Aorta (tissue), 5 donors: ENCODE measurements at regions of chr5 and their contacts with region 1.

Region 1: GRCh38 chr5:135466178-135467050 is 14.3 kb upstream of the TIFAB start:
- DNase-seq: peak; percentile 85 to 94
- ATAC-seq: peak; percentile 87
- H3K4me3 ChIP-seq: no peak overlapping the region
- H3K27ac ChIP-seq: no peak overlapping the region
- H3K4me1 ChIP-seq: no peaks in the 10 kb centered on the region
- H3K27me3 ChIP-seq: no peaks in the 10 kb centered on the region

Region 2: DNA sequence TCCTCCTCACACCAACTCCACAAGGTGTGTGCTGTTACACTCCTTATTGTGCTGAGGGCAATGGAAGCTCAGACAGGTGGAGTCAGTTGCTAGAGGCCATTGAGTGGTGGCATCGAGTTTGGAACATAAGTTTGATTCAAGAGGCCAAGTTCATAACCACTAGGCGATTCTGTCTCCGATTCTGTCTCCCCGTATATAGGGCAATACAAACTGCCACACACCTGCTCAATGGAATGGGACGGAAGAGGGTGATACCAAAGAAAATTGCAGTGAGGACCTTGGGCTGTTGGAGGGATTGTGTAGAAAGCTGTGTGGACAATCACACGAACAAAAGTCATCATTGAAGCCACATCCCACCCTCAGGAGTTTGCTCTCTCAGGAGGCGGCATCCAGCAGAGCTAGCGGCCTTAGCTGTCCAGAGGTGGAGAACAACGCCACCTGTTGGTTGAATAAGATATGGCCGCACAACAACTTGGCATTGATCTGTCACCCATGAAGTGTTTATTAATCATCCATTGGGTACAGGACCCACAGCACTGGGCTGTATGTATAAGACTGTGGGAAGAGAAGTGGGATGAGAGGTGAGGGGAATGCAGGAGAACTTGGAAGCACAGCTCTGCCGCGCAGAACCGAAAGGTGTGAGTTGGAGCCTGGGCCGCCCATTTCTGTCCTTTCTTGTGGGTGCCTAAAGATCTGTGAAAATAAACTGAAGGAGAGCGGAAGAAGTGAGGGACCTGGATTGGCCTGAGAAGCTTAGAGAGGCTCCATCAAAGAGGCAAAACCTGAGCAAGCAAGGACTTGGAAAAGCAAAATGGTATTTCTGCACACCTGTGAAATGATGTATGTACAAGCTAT is 85.4 kb after region 1 on chr5:
- intact Hi-C with region 1: loop called (anchors 1 to 2 kb)
- DNase-seq: peak in 1 of 2 donors; percentile 68
- ATAC-seq: peak; percentile 78
- H3K4me3 ChIP-seq: no peak overlapping the region
- H3K27ac ChIP-seq: no peak overlapping the region
- H3K4me1 ChIP-seq: no peaks in the 10 kb centered on the region
- H3K27me3 ChIP-seq: peaks cover 0 to 1% of the 10 kb centered on the region in 2 donors

Region 3: DNA sequence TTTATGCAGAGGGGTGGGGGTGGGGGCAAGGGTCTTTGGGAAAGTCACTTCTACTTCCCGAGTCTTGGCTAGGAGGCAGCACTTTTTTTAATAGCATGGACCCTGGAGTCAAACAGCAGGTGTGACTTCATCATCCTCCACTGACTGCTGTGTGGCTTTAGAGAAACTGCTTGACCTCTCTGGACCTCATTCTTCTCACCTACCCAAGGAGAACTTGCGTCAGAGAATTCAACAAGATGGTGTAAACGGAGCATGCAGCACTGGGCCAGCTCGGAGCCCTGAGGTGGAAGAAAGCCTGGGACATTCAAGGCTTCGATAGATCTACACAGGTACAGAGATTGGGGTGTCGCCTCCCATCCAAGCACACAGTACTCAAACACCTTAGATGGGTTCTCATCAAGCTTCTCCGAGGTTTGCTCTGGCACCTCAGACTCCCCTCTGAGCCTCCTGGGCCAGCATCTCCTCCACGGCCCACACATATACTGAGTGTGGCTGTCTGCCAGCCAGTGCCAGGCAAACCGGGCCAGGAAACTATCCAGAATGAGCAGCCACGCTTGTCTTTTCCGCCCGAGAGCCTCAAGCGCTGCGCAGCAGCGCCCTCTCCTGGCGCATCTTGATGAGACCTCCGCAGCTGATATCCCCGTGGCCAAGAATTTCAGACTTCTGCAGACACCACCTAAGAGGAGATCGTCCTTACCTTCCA is 363.4 kb after region 1 on chr5:
- intact Hi-C with region 1: loop called in 1 of 2 experiments (anchors 5 kb)
- DNase-seq: peak; percentile 61 to 85
- ATAC-seq: peak; percentile 27
- H3K4me3 ChIP-seq: no peak overlapping the region
- H3K27ac ChIP-seq: no peak overlapping the region
- H3K4me1 ChIP-seq: no peaks in the 10 kb centered on the region
- H3K27me3 ChIP-seq: peaks cover 0 to 2% of the 10 kb centered on the region in 2 donors